ENCODE measurements at regions of chr1 and their contacts with region 1.

Region 1: DNA sequence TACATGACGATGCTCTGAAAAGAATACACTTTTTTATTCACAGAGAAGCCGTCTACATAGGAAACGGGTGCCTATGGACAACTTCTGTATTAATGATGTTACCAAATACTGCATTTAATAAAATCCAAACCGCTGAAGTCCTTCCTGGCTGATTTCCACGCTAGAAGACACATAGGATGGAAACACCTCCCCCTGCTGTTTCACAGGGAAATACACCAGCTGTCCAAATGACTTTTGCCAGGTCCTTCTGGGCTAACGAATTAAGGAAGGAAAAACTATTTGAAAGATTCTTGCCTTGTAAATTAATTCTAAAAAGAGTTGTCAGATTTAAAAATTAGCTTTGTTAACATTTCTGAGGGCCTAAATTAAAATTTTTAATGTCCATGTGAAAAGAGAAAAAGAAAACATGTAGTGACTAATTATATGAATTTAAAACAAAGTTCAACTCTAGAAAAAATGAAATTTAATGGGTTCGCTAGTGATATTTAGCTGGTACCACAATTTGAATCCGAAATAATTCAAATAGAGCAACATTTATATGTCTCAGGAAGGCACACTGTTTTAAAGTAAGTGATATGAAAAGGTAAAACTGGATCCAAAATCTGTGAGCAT is 146.0 kb downstream of the RERE start:
- DNase-seq: no peak
- ATAC-seq: no peak
- H3K4me3 Mint-ChIP-seq: no peak overlapping the region
- H3K27ac Mint-ChIP-seq: peak overlapping the region; percentile 5; the same call in 1 of the 2 replicates
- H3K4me1 Mint-ChIP-seq: peaks cover 59% of the 10 kb centered on the region
- H3K27me3 Mint-ChIP-seq: no peaks in the 10 kb centered on the region
- CTCF ChIP-seq: no peak; the same call in 1 of the 2 replicates

Region 2: GRCh38 chr1:8560611-8561544 is 110.5 kb before region 1 on chr1:
- CTCF ChIA-PET with region 1: interaction called, 16 read pairs
- POLR2A ChIA-PET with region 1: no interaction called
- DNase-seq: no peak
- ATAC-seq: peak; percentile 69
- H3K4me3 Mint-ChIP-seq: no peak overlapping the region
- H3K27ac Mint-ChIP-seq: peak overlapping the region; percentile 47
- H3K4me1 Mint-ChIP-seq: peaks cover 37% of the 10 kb centered on the region
- H3K27me3 Mint-ChIP-seq: no peaks in the 10 kb centered on the region
- CTCF ChIP-seq: peak; percentile 36

Region 3: DNA sequence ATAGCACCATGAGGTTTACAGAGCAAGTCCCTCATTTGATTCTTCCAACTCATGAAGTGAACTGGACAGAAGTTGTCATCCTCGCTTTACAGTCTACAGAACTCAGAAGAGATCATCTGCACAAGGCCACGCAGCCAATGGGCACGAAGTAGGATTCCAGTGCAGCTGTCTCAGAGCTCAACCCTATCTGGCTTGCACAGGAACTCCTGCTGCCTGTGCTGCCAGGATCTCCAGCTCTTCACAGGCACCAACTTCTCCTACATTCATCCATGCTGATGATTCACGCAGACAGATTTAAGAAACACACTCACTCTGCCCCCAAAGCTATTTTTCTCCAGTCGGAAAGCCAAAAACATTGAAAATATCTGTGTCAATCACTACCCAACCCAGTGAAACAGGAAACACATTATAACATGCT is 11.0 kb before region 1 on chr1:
- CTCF ChIA-PET with region 1: interaction called, 12 read pairs
- POLR2A ChIA-PET with region 1: no interaction called
- DNase-seq: no peak
- ATAC-seq: no peak; the same call in 1 of the 2 replicates
- H3K4me3 Mint-ChIP-seq: no peak overlapping the region
- H3K27ac Mint-ChIP-seq: no peak overlapping the region
- H3K4me1 Mint-ChIP-seq: peaks cover 15% of the 10 kb centered on the region
- H3K27me3 Mint-ChIP-seq: no peaks in the 10 kb centered on the region
- CTCF ChIP-seq: no peak